CD4-positive, alpha-beta T cell (primary cell): ENCODE measurements at regions of chr19 and their contacts with region 1.

Region 1: DNA sequence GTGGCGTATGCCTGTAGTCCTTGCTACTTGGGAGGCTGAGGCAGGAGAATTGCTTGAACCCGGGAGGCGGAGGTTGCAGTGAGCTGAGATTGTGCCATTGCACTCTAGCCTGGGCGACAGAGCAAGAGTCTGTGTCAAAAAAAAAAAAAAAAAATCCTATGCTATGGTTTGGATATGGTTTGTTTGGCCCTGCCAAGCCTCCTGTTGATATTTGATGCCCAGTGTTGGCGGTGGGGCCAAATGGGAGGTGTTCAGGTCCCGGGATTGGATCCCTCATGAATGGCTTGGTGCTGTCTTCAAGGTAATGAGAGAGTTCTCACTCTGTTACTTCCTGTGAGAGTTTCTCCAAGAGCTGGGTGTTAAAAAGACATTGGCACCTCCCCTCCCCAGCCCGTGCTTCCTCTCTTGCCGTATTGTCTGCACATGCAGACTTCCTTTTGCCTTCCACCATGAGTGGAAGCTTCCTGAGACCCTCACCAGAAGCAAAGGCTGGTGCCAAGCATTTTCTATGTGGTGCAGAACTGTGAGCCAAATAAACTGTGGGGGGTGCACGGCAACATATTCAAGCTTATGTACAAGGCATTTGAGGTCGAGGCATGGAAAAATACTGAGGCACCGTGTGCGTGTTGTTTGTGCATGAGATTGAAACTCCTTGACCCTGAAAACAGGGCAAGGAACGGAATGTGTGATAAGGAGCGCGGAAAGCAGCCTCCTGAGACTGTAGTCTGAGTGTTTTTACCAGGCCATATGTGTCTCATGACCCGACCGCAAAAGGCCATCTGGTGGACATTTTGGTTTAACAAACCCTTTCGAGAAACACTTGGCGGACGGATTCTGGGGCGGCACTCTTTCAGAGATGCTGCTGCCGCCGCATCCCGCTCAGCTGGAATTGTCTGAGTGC is 7.3 kb downstream of the SIGLEC9 start:
- DNase-seq: peak in 7 of 14 experiments; percentile 14 to 78 (median 48)
- ATAC-seq: peak; percentile 81
- H3K4me3 ChIP-seq: peak overlapping the region; percentile 10
- H3K4me3 Mint-ChIP-seq: peak overlapping the region; percentile 80
- H3K27ac ChIP-seq: peak overlapping the region in 1 of 2 donors; percentile 4
- H3K27ac Mint-ChIP-seq: peak overlapping the region; percentile 87
- H3K4me1 ChIP-seq: peaks cover 63% of the 10 kb centered on the region
- H3K4me1 Mint-ChIP-seq: peaks cover 62% of the 10 kb centered on the region
- H3K27me3 ChIP-seq: no peaks in the 10 kb centered on the region
- H3K27me3 Mint-ChIP-seq: no peaks in the 10 kb centered on the region
- CTCF ChIP-seq: peak; percentile 22

Region 2: DNA sequence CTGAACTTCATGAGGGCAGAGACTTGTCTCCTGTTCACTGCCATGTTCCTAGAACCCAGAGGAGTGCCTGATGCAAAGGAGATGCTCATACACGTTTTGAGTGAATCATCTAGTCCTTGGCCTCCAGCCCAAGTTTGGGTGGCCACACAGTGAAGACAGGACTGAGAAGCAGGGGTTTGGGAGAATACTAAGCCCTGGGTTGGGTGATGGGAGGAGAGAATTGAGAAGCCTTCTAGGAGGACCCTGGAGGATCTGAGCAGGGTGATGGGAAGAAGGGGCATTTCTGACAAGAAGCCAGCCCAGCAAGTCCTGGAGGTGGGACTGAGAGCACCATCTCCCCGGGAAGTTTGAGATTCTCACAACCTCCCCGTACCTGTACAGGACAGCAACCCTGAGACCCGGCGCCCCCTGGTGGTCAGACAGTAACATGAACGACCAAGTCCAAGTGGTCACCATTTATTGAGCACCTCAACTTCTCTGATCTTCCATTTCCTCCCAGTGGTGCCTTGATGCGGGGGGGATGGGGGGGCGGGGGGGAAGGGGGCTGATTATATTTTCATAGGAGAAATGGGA is 34.8 kb before region 1 on chr19:
- CTCF ChIA-PET with region 1: interaction called, 3 read pairs
- POLR2A ChIA-PET with region 1: no interaction called
- intact Hi-C with region 1: loop called in 1 of 2 experiments (anchors 5 kb)
- DNase-seq: peak; percentile 50 to 80 (median 65)
- ATAC-seq: peak; percentile 50
- H3K4me3 ChIP-seq: no peak overlapping the region
- H3K4me3 Mint-ChIP-seq: no peak overlapping the region
- H3K27ac ChIP-seq: no peak overlapping the region
- H3K27ac Mint-ChIP-seq: no peak overlapping the region
- H3K4me1 ChIP-seq: peaks cover 17% of the 10 kb centered on the region
- H3K4me1 Mint-ChIP-seq: peaks cover 23% of the 10 kb centered on the region
- H3K27me3 ChIP-seq: no peaks in the 10 kb centered on the region
- H3K27me3 Mint-ChIP-seq: no peaks in the 10 kb centered on the region
- CTCF ChIP-seq: peak; percentile 42

Region 3: GRCh38 chr19:51108066-51108804 is 23.8 kb before region 1 on chr19 and contains the start of gene CTU1:
- CTCF ChIA-PET with region 1: no interaction called
- POLR2A ChIA-PET with region 1: interaction called, 12 read pairs
- intact Hi-C with region 1: no loop called
- DNase-seq: peak; percentile 96 to 100 (median 98)
- ATAC-seq: peak; percentile 98
- H3K4me3 ChIP-seq: peak within 1 kb of the TSS; percentile 83
- H3K4me3 Mint-ChIP-seq: peak within 1 kb of the TSS; percentile 95
- H3K27ac ChIP-seq: peak within 1 kb of the TSS; percentile 60 to 63
- H3K27ac Mint-ChIP-seq: peak within 1 kb of the TSS; percentile 91
- H3K4me1 ChIP-seq: peaks cover 29% of the 10 kb centered on the region
- H3K4me1 Mint-ChIP-seq: peaks cover 38% of the 10 kb centered on the region
- H3K27me3 ChIP-seq: no peaks in the 10 kb centered on the region
- H3K27me3 Mint-ChIP-seq: no peaks in the 10 kb centered on the region
- CTCF ChIP-seq: no peak
- total RNA-seq, gene CTU1: 1.4 to 1.6 TPM

Region 4: GRCh38 chr19:51194527-51195317 is 62.7 kb after region 1 on chr19:
- CTCF ChIA-PET with region 1: no interaction called
- POLR2A ChIA-PET with region 1: no interaction called
- intact Hi-C with region 1: no loop called
- DNase-seq: peak in 1 of 14 experiments; percentile 43
- ATAC-seq: peak; percentile 90
- H3K4me3 ChIP-seq: no peak overlapping the region
- H3K4me3 Mint-ChIP-seq: no peak overlapping the region
- H3K27ac ChIP-seq: no peak overlapping the region
- H3K27ac Mint-ChIP-seq: no peak overlapping the region
- H3K4me1 ChIP-seq: no peaks in the 10 kb centered on the region
- H3K4me1 Mint-ChIP-seq: no peaks in the 10 kb centered on the region
- H3K27me3 ChIP-seq: peaks cover 0 to 2% of the 10 kb centered on the region in 2 experiments
- H3K27me3 Mint-ChIP-seq: peaks cover 4% of the 10 kb centered on the region
- CTCF ChIP-seq: no peak